ENCODE measurements at regions of chr7 and their contacts with region 1.

Region 1: DNA sequence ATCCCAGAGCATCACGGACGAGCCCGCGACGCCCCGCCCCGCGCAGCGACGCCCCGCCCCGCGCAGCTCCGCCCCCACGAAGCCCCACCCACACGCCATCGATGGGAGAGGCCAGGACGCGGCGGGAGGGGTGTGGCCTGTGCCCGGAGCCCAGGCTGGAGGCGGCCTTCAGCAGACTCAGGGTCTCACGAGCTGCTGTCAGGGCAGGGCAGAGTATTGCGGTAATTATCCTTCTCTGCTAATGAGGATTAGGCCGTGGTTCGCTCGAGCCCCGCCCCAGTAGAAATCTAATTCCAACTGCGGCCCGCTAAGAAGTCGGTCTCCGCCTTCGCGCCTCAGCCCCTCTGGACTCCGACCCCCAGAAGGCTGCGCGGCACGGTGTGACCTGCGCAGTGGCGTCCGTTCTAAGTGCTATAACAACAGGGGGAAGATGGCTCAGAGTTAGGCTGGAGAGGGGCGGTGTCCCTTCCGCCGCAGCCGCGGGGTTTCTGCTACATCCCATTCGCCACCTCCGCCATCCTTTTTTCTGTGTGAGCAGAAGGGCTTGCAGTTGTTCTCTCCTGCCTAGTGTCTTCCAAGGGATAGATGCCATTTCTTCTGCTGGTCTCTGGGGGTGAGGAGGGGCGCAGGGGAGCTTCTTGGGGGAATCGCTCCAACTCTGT is 337 bp upstream of the NT5C3A start:
- DNase-seq: peak; percentile 84 to 98 (median 95)

Region 2: DNA sequence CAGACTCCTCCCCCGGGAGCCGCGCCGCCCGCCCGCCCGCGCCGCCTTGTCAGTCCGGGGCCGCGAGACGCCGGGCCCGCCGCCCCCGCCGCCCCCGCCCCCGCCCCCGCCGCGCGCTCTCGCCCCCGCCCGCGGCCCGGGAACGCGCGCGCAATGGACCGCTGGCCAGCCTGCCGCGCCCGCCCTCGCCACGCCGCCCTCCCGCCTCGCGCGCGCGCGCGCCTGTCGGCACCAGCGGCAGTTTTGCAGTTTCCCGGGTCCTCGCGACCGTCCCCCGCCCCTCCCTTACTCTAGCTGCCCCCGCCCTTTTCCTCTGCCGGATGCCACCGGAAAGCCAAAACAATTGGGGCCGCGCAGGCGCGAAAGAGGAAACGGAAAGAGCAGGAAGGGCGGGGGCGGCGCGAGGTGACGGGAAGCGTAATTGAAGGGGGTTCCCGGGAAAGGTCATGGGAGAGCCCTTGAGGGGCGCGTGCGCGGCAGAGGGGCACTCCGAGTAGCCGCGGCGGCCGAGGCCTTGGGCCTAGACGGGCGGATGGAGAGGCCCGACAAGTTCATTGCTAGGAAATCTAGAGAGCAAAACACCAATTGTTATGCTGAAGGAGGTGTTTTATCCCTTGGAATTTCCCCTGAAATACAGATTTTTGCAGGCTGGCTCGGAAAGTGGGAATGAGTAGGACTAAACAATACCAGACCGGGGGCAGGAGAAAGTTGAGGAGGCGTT is 171.0 kb before region 1 on chr7:
- intact Hi-C with region 1: loop called (anchors 2 kb)
- DNase-seq: peak; percentile 91 to 99 (median 96)

Region 3: GRCh38 chr7:32942786-32943653 is 119.9 kb before region 1 on chr7:
- intact Hi-C with region 1: loop called (anchors 5 kb)
- DNase-seq: peak; percentile 39 to 91 (median 84)

Region 4: GRCh38 chr7:33109005-33109757 is 46.3 kb after region 1 on chr7 and contains the start of gene RP9:
- intact Hi-C with region 1: loop called (anchors 5 kb)
- DNase-seq: peak; percentile 11 to 87 (median 74)

Region 5: GRCh38 chr7:33128990-33129805 is 66.3 kb after region 1 on chr7 and contains the start of gene BBS9:
- intact Hi-C with region 1: loop called (anchors 5 kb)
- DNase-seq: peak; percentile 92 to 99 (median 95)

Measured in head of caudate nucleus (tissue), 42 donors.